ENCODE measurements at regions of chr6 and their contacts with region 1.

Region 1: DNA sequence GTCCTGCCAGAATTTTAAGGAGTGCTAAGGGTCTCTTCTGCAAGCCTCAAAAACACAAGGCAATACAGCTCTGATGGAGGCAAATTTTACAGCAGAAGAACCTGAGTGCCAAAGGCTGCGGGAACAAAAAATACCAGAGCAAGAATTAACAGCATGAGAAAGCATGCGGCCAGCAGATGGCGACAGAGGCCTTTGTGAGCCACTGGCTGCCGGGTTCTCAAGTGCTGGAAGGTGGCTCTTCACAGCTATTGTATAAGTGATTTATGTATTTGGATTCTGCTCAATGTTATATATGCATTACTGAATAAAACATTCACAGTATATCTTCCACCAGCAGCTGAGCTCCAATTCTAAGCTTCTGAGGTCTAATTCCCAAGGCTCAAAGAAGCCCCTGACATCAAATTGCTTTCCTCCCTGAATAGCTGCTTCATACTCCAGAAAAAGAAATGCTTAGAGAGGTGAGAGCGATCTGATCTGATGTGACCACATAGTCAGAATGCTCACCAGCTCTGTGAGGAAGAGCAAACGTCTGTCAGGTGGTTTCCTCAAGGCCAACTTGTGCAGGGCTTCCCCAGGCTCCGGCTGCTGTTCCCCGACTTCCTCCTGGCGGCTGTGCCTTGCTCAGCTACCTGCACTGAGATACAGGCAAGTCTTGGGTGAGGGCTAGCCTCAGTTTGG is 58.6 kb downstream of the PPP1R3G start:
- DNase-seq: peak; percentile 79 to 91 (median 81)
- ATAC-seq: peak; percentile 53 to 85 (median 76)
- H3K4me3 ChIP-seq: no peak overlapping the region
- H3K27ac ChIP-seq: no peak overlapping the region
- H3K4me1 ChIP-seq: peaks cover 0 to 7% (median 0%) of the 10 kb centered on the region in 12 donors
- H3K27me3 ChIP-seq: no peaks in the 10 kb centered on the region
- CTCF ChIP-seq: peak; percentile 80 to 98 (median 92)
- POLR2A ChIP-seq: no peak

Region 2: GRCh38 chr6:5214570-5215052 is 70.8 kb after region 1 on chr6:
- intact Hi-C with region 1: loop called in 8 of 10 experiments (anchors 1 to 10 kb)
- DNase-seq: peak in 4 of 5 donors; percentile 39 to 72 (median 55)
- ATAC-seq: peak; percentile 86 to 94 (median 90)
- H3K4me3 ChIP-seq: peak overlapping the region in 1 of 12 donors; percentile 16
- H3K27ac ChIP-seq: peak overlapping the region in 5 of 12 donors; percentile 11 to 36 (median 17)
- H3K4me1 ChIP-seq: peaks cover 0 to 34% (median 15%) of the 10 kb centered on the region in 12 donors
- H3K27me3 ChIP-seq: no peaks in the 10 kb centered on the region
- CTCF ChIP-seq: peak; percentile 51 to 77 (median 70)
- POLR2A ChIP-seq: no peak

Region 3: DNA sequence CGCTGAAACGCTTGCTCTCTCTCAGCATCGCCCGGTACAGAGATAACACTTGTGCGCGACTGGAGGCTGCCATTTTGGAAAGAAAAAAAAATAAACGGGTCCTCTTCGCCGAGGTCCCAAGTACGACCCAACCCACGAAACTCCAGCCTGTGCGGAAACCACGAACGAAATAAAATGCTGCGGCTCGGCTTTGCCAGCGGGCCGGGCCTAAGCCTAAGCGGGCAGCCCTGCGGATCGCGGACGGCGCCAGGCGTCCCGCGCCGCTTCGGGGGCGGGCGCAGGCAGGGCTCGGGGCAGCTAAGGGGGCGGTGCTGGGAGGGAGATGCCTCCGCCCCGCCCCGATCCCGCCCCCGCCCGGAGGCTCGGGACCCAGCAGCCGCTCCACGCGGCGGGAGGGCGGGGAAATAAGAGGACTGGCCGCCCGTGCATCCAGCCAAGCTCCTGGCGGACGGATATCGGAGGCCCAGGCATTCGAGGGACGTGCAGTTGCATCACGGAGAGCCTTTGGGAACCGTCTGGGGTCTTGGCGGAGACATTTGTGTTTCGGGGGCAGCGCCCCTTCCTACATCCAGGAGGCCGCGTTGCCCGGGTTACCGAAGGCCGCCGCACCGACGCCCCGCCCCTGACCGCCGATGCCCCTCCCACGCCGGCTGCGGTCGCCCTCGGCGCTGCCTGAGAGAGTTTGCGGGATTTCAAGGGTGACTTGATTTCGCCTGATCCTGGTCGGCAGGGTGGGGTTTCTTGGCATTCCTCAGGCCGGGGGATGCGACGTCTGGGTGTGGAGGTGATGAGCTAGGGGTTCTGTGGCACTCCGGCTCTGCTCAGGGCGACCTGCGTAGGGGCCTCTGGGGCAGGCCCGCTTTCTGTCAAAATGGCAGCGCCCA is 117.1 kb after region 1 on chr6 and contains the starts of genes FARS2 and LYRM4:
- intact Hi-C with region 1: loop called in 4 of 10 experiments (anchors 5 to 10 kb)
- DNase-seq: peak; percentile 90 to 95 (median 93)
- ATAC-seq: peak; percentile 89 to 99 (median 98)
- H3K4me3 ChIP-seq: peak within 1 kb of the TSS; percentile 67 to 91 (median 81)
- H3K27ac ChIP-seq: peak within 1 kb of the TSS; percentile 92 to 100 (median 98)
- H3K4me1 ChIP-seq: peaks cover 0 to 26% (median 16%) of the 10 kb centered on the region in 12 donors
- H3K27me3 ChIP-seq: no peaks in the 10 kb centered on the region
- CTCF ChIP-seq: peak in 6 of 12 donors; percentile 13 to 58 (median 22)
- POLR2A ChIP-seq: peak in 1 of 2 donors; percentile 43
- total RNA-seq, gene FARS2: 17.1 to 24.6 (median 20.5) TPM
- total RNA-seq, gene LYRM4: 18.8 to 39.7 (median 21.3) TPM

Region 4: DNA sequence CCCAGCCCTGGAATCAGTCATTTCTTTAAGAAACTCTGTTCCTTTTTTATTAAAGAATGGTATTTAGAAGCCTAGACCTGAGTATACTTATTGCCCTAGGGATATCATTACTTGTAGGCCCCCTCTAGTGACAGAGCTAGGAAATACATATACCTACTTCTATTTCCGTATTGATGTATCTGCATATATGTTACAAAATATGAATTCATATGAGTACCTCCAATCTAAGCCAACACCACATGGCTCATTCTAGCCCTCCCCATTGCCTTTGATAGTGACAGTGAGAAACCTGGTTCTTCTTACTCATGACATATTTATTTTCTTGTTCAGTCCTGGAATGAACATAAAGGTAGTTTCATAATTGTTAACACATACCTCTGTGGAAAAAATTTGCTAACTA is 254.8 kb after region 1 on chr6:
- intact Hi-C with region 1: loop called (anchors 1 to 5 kb)
- DNase-seq: no peak
- ATAC-seq: no peak
- H3K4me3 ChIP-seq: no peak overlapping the region
- H3K27ac ChIP-seq: no peak overlapping the region
- H3K4me1 ChIP-seq: peaks cover 0 to 7% (median 0%) of the 10 kb centered on the region in 12 donors
- H3K27me3 ChIP-seq: no peaks in the 10 kb centered on the region
- CTCF ChIP-seq: peak; percentile 28 to 61 (median 43)
- POLR2A ChIP-seq: no peak